Activated CD8-positive, alpha-beta T cell treated with anti-CD3 and anti-CD28 coated beads for 36 hours (primary cell): ENCODE measurements at regions of chr1 and their contacts with region 1.

Region 1: GRCh38 chr1:12619792-12620487 is 1.9 kb upstream of the DHRS3 start:
- DNase-seq: peak; percentile 86
- ATAC-seq: peak; percentile 46
- H3K4me3 Mint-ChIP-seq: peak overlapping the region; percentile 96
- H3K27ac Mint-ChIP-seq: peak overlapping the region; percentile 99
- H3K4me1 Mint-ChIP-seq: peaks cover 32% of the 10 kb centered on the region
- H3K27me3 Mint-ChIP-seq: no peaks in the 10 kb centered on the region
- CTCF ChIP-seq: peak; percentile 98

Region 2: GRCh38 chr1:12314333-12314903 is 305.5 kb before region 1 on chr1:
- CTCF ChIA-PET with region 1: interaction called, 20 read pairs
- POLR2A ChIA-PET with region 1: no interaction called
- intact Hi-C with region 1: loop called (anchors 10 kb)
- DNase-seq: no peak
- ATAC-seq: peak; percentile 51
- H3K4me3 Mint-ChIP-seq: no peak overlapping the region
- H3K27ac Mint-ChIP-seq: no peak overlapping the region
- H3K4me1 Mint-ChIP-seq: no peaks in the 10 kb centered on the region
- H3K27me3 Mint-ChIP-seq: no peaks in the 10 kb centered on the region
- CTCF ChIP-seq: peak; percentile 73

Region 3: DNA sequence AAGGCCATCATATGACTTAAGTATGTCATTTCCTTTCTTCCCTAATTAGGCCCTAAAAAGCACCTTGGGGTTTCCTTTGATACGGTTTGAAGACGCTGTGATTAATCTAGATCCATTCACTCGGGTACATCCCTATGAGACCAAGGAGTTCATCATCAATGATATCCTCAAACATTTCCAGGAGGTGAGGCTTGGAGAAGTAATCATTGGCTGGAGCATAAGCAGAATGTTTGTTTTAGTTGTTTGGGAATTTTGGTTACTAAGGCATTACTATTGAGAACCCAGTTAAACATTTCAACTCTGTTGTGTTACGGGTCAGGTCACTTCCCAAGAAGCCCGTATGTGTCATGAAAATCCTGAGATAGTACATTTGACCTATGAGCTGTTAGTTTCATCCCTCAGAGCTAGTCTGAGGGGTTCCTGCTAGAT is 204.9 kb before region 1 on chr1:
- CTCF ChIA-PET with region 1: interaction called, 11 read pairs
- POLR2A ChIA-PET with region 1: no interaction called
- intact Hi-C with region 1: no loop called
- DNase-seq: no peak
- ATAC-seq: peak; percentile 80
- H3K4me3 Mint-ChIP-seq: no peak overlapping the region
- H3K27ac Mint-ChIP-seq: peak overlapping the region; percentile 86
- H3K4me1 Mint-ChIP-seq: peaks cover 42% of the 10 kb centered on the region
- H3K27me3 Mint-ChIP-seq: no peaks in the 10 kb centered on the region
- CTCF ChIP-seq: no peak

Region 4: DNA sequence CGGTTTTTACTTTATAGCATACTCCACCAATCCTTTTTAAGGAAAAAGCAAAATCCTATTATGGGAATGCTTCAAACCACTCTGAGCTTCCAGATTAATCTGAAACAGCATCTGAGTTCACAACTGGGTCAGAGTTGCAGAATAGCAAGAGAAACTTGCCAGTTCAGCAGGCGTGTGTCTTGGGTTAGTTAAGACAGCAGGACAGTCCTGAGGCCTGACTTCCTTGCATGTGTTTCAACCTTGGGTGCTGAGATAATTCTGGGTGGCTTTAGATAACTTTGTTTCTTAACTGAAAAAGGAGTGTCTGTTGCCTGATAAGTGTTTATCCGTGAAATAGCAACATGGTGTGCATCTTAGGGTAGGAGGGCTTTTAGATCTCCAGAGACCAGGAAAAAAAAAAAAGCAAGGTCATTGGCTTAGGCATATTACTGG is 171.2 kb before region 1 on chr1:
- CTCF ChIA-PET with region 1: interaction called, 10 read pairs
- POLR2A ChIA-PET with region 1: interaction called, 5 read pairs
- intact Hi-C with region 1: no loop called
- DNase-seq: no peak
- ATAC-seq: no peak
- H3K4me3 Mint-ChIP-seq: peak overlapping the region; percentile 57
- H3K27ac Mint-ChIP-seq: peak overlapping the region; percentile 95
- H3K4me1 Mint-ChIP-seq: peaks cover 93% of the 10 kb centered on the region
- H3K27me3 Mint-ChIP-seq: no peaks in the 10 kb centered on the region
- CTCF ChIP-seq: no peak

Region 5: GRCh38 chr1:12477936-12478611 is 141.9 kb before region 1 on chr1:
- CTCF ChIA-PET with region 1: interaction called, 3 read pairs
- POLR2A ChIA-PET with region 1: interaction called, 10 read pairs
- intact Hi-C with region 1: loop called (anchors 2 kb)
- DNase-seq: peak; percentile 66
- ATAC-seq: peak; percentile 39
- H3K4me3 Mint-ChIP-seq: peak overlapping the region; percentile 40
- H3K27ac Mint-ChIP-seq: peak overlapping the region; percentile 95
- H3K4me1 Mint-ChIP-seq: peaks cover 88% of the 10 kb centered on the region
- H3K27me3 Mint-ChIP-seq: no peaks in the 10 kb centered on the region
- CTCF ChIP-seq: no peak

Region 6: DNA sequence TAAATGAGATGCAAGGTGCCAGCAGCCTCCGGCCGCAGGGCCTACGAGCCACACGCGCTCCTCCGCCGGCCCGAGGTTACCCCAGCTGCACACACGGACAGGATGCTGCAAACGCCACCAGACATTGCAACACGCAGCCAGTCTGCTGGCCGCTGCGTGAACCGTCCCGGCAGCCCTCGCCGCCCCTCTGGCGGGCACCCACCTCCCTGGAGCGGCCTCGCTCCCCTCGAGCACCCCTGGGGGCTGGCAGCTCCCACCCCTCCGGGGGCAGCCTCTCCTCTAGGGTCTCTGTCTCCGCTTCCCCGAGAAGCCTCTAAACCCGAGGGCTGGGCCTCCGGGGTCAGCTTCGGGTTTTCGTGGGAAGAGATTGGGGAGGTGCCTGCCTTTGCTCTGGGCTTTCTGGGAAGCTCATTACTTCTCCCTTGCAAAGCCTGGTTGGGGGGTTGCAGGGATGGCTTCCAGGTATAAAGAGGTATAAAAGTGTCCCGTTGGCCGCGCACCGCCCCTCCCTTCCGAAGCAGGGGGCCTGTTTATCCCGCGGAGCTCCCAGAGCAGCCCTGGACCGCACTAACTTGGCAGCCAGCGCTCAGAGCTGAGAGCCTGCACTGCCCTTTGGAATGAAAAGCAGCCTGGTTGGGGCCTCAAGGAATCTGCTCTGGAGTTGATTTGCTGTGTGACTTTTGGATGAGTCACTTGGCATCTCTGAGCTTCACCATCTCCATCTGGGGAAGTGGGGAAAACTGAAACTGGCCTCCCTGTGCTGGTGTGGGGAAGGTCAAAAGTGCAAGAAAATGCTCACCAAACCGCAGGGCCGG is 23.7 kb before region 1 on chr1:
- CTCF ChIA-PET with region 1: interaction called, 34 read pairs
- POLR2A ChIA-PET with region 1: interaction called, 4 read pairs
- intact Hi-C with region 1: no loop called
- DNase-seq: peak; percentile 70
- ATAC-seq: peak; percentile 57
- H3K4me3 Mint-ChIP-seq: peak overlapping the region; percentile 45
- H3K27ac Mint-ChIP-seq: no peak overlapping the region
- H3K4me1 Mint-ChIP-seq: peaks cover 68% of the 10 kb centered on the region
- H3K27me3 Mint-ChIP-seq: no peaks in the 10 kb centered on the region
- CTCF ChIP-seq: no peak

Region 7: GRCh38 chr1:12658531-12659453 is 38.9 kb after region 1 on chr1:
- CTCF ChIA-PET with region 1: interaction called, 16 read pairs
- POLR2A ChIA-PET with region 1: no interaction called
- intact Hi-C with region 1: no loop called
- DNase-seq: peak; percentile 78
- ATAC-seq: peak; percentile 90
- H3K4me3 Mint-ChIP-seq: peak overlapping the region; percentile 22
- H3K27ac Mint-ChIP-seq: no peak overlapping the region
- H3K4me1 Mint-ChIP-seq: peaks cover 7% of the 10 kb centered on the region
- H3K27me3 Mint-ChIP-seq: peaks cover 6% of the 10 kb centered on the region
- CTCF ChIP-seq: peak; percentile 97